A549 (cell line): ENCODE measurements at regions of chr2 and their contacts with region 1.

Region 1: DNA sequence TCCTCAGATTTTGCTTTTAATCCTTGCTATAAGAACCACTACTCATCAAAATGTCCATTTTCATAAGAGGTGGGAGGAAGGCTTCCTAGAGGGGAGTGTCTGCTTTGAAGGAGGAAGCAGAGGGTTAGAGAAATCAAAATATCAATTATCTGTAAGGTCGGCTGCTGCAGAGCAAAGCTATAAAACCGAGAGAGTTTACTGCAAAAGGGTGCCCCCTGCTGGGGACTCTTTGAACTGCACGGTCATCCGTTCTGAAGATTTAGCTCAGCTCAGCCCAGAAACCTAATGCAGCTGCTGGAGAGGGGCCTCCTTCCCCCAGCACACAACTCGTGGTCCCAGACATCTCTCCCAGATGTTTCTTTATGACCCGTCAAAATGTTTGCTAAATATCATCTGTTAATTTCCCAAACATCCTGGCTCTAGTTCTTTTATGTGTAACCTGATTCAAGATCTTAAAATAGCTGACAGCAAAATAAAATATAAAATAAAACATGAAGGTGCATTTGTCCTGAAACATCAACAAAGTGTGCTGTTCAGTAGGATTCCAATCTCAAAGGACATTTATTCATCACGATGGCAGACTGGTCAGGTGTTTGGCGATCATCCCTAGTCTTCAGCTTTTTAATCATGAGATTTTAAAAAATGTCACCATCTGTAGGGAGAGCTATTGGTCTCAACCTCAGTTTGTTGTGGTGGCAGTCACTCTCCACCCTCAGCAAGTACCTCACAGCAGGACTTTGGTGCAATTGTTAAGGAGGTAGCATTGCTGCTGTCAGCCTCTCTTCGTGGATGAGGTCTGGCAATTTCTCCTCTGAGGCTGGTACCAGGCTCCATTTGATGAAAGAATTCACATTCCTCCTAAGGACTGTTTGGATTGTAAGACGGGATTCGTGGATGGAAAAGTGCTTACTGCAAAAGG is 185.9 kb downstream of the MTX2 start:
- DNase-seq: peak; percentile 31 to 59
- ATAC-seq: peak; percentile 87 to 93
- H3K4me3 ChIP-seq: no peak overlapping the region
- H3K27ac ChIP-seq: no peak overlapping the region
- H3K4me1 ChIP-seq: no peaks in the 10 kb centered on the region
- CTCF ChIP-seq: peak; percentile 90
- EP300 ChIP-seq: no peak
- POLR2A ChIP-seq: no peak
- RAD21 ChIP-seq: peak; percentile 83 to 86

Region 2: DNA sequence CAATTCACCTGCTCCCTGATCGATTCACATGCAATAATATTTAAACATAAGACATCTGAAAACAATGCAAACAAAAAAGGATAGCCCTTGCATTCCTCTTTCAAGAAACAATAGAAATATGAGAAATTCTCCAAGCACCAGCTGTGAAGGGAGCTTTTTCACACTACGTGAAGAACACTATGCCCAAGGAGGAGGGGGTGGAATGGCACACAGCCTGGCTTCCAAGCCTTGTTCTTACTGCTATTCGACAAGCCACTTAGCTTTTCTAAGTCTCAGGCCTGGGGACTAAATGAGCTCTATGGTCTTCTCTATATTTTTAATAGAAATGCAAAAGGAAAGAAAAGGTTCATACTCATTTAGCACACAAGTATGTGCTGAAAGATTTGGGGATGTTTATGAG is 1598.7 kb before region 1 on chr2:
- CTCF ChIA-PET with region 1: no interaction called
- POLR2A ChIA-PET with region 1: no interaction called
- DNase-seq: no peak
- ATAC-seq: no peak
- H3K4me3 ChIP-seq: no peak overlapping the region
- H3K27ac ChIP-seq: no peak overlapping the region
- H3K4me1 ChIP-seq: no peaks in the 10 kb centered on the region
- CTCF ChIP-seq: no peak
- EP300 ChIP-seq: no peak
- POLR2A ChIP-seq: no peak
- RAD21 ChIP-seq: no peak

Region 3: DNA sequence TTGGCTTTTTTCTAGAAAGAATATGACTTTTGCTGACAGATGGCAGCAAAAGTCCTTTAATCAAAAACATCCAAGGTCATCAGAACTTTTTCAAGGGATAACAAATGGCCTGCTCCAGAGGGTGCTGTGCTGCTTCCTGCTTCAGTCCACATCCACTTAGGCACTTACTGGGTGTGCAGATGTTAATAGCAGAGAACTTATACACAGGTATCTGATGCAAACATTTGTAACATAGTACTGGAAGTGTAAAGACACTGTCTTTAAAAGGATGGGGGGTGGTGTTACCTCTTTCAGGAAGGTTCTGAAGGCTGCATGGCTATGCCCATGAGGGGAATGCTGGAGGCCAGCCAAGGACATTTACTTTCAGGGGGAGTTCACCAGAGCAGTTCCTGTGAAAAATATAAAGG is 320.1 kb before region 1 on chr2:
- CTCF ChIA-PET with region 1: interaction called, 181 read pairs
- POLR2A ChIA-PET with region 1: no interaction called
- DNase-seq: peak in 1 of 2 experiments; percentile 15
- ATAC-seq: no peak
- H3K4me3 ChIP-seq: no peak overlapping the region
- H3K27ac ChIP-seq: peak overlapping the region; percentile 80 to 87; a peak in 3 of 6 replicates
- H3K4me1 ChIP-seq: peaks cover 10% of the 10 kb centered on the region; the same call in 2 of the 3 replicates
- CTCF ChIP-seq: no peak
- EP300 ChIP-seq: no peak
- POLR2A ChIP-seq: no peak
- RAD21 ChIP-seq: peak; percentile 36 to 50; a peak in 3 of 5 replicates

Region 4: DNA sequence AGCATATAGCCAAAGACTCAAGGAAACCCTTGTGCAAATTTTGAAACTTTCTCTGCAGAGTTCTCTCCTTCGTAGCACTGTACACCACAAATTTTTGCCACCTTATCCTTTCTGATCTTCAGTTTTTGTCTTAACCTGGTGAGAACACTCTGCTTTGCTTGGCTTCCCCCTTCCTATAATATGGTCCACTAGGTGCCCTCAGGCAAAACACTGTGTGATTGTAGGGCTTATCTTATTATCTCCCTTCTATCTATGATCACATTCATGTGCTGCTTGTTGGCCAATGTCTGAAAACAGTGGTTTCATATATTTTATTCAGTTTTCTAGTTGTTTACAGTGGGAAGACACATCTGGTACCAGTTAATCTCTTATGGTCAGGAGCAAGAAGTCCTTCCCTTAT is 74.8 kb before region 1 on chr2:
- CTCF ChIA-PET with region 1: no interaction called
- POLR2A ChIA-PET with region 1: no interaction called
- DNase-seq: no peak
- ATAC-seq: no peak
- H3K4me3 ChIP-seq: no peak overlapping the region
- H3K27ac ChIP-seq: no peak overlapping the region
- H3K4me1 ChIP-seq: no peaks in the 10 kb centered on the region
- CTCF ChIP-seq: no peak
- EP300 ChIP-seq: no peak
- POLR2A ChIP-seq: no peak
- RAD21 ChIP-seq: no peak

Region 5: DNA sequence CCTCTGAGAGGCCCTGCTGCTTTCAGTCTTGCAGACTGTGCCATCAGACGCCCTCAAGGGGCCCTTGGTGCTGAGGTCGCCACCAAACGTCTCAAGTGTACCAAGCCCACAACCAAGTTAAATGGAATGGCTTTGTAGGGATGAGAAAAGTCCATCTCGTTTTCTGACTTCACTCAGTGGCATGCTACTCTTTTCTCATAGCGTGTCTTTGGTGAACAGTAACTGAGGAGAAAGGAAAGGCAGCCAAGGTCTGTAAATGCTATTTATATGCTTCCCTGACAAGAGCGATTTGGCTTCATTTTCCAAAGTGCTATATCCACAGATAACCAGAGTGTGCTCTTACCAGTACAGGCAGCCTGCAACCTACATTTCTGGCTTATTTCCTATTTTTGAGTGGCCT is 62.9 kb before region 1 on chr2:
- CTCF ChIA-PET with region 1: no interaction called
- POLR2A ChIA-PET with region 1: no interaction called
- DNase-seq: no peak
- ATAC-seq: no peak; a peak in 1 of 6 replicates
- H3K4me3 ChIP-seq: no peak overlapping the region
- H3K27ac ChIP-seq: no peak overlapping the region
- H3K4me1 ChIP-seq: peaks cover 5% of the 10 kb centered on the region; the same call in 1 of the 3 replicates
- CTCF ChIP-seq: no peak
- EP300 ChIP-seq: no peak
- POLR2A ChIP-seq: no peak
- RAD21 ChIP-seq: no peak

Region 6: GRCh38 chr2:176419591-176420071 is 35.5 kb before region 1 on chr2:
- CTCF ChIA-PET with region 1: interaction called, 15 read pairs
- POLR2A ChIA-PET with region 1: no interaction called
- DNase-seq: no peak
- ATAC-seq: peak in 1 of 2 experiments; percentile 55; a peak in 3 of 6 replicates
- H3K4me3 ChIP-seq: no peak overlapping the region
- H3K27ac ChIP-seq: no peak overlapping the region
- H3K4me1 ChIP-seq: peaks cover 7% of the 10 kb centered on the region; the same call in 2 of the 3 replicates
- CTCF ChIP-seq: no peak
- EP300 ChIP-seq: no peak
- POLR2A ChIP-seq: no peak
- RAD21 ChIP-seq: no peak

Region 7: GRCh38 chr2:176473177-176473576 is 18.0 kb after region 1 on chr2:
- CTCF ChIA-PET with region 1: interaction called, 22 read pairs
- POLR2A ChIA-PET with region 1: no interaction called
- DNase-seq: no peak
- ATAC-seq: no peak
- H3K4me3 ChIP-seq: no peak overlapping the region
- H3K27ac ChIP-seq: no peak overlapping the region
- H3K4me1 ChIP-seq: no peaks in the 10 kb centered on the region
- CTCF ChIP-seq: no peak
- EP300 ChIP-seq: no peak
- POLR2A ChIP-seq: no peak
- RAD21 ChIP-seq: no peak